GM10248 (cell line): ENCODE measurements at regions of chr4 and their contacts with region 1.

Region 1: GRCh38 chr4:147843162-147843561 is 111.3 kb downstream of the ARHGAP10 start:
- DNase-seq: peak; percentile 37
- CTCF ChIP-seq: peak; percentile 4

Region 2: DNA sequence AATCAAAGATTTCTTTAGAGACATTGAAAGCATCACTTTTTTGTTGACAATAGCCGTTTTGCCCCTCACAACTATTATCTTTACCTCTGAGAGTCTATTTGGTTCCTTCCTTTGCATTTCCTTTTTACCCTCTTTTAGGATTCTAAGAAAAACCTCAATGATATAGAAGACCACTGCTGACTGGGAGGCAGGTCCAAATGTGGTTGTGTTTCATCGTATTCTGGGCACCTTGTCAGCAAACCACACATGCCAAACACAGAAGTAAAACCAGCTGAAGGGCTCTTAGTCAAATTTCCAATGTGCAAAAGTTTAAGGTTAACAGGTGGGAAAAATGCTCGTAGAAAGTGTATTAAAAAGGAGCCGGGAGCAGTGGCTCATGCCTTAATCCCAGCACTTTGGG is 154.1 kb before region 1 on chr4:
- CTCF ChIA-PET with region 1: interaction called, 3 read pairs
- POLR2A ChIA-PET with region 1: interaction called, 10 read pairs
- DNase-seq: no peak
- CTCF ChIP-seq: no peak

Region 3: DNA sequence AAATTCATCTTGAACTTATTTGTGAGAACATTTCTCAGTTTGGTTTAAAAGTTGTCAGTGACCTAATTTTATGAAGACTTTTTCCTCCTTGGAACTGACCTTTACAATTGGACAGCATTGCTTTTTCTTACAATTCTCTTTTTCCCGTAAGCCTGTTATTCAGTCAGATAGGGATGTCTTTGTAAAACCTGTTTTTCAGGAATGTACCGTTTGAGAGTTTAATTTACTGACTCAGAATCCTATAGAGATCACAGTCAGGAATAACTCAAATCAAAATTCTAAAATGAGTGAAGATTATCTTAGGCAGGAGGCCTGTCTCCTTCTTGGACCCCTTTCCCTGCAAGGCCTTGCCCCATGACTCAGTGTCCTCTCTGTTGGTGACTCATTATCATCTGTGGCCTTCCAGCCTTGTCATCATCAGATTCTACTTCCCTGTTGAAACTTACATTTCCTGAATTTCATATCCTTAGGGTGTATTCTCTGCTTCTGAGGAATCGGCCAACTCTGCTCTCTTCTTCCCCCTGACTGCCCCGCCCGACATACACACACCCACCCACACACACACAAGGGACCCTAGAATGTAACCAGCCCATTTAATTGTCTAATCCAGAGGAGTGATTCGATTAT is 11.5 kb before region 1 on chr4:
- CTCF ChIA-PET with region 1: interaction called, 15 read pairs
- POLR2A ChIA-PET with region 1: interaction called, 3 read pairs
- DNase-seq: no peak
- CTCF ChIP-seq: no peak

Region 4: DNA sequence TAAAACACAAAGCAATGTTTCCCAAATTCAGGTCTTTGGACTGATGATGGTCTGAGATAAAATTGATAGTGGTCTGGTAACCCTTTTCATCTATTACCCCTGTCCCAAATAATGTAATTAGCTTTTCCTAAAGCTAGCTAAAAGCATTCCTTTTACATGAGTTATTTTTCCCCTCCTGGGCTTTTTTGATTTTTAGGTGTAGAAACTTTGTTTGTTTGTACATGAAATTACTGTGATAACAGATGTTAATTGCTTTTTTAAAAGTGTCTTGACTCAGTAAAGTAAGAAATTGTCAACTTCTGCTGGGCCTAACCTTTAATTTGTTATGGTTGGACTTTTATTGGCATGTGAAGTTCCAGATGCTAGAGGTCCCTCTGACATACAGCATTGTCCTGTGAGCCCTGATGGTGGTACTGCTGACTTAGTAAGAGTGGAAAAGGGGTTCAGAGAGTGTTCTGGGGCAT is 34.2 kb after region 1 on chr4:
- CTCF ChIA-PET with region 1: no interaction called
- POLR2A ChIA-PET with region 1: no interaction called
- DNase-seq: no peak
- CTCF ChIP-seq: no peak